Ascending aorta (tissue), 2 donors: ENCODE measurements at regions of chr2 and their contacts with region 1.

Region 1: DNA sequence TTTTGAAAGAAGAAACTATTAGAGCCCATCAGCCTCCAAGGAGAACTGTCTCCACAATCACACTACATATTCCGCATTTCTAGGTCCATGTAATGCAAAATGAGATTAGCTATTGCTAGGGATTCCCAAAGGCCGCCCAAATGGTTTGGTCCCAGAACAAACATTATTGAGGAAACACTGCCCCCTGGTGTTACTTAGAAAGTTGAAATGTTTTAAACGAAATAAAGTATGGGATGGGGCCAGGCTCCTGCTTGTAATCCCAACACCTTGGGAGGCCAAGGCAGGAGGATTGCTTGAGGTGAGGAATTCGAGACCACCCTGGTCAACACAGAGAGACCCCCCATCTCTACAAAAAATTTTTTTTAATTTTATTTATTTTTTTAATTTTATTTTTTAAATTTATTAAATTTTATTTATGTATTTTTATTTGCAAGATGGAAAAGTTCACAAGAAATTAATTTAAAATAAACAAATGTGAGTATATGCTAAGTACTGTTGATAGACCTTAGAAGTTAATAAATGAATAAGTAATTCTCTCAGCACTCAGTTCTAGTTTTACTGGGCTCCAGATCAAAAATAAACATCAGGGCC is 5.5 kb downstream of the NHEJ1 start:
- DNase-seq: no peak
- H3K4me3 ChIP-seq: no peak overlapping the region
- H3K27ac ChIP-seq: no peak overlapping the region
- H3K4me1 ChIP-seq: peaks cover 0 to 5% of the 10 kb centered on the region in 2 donors
- H3K27me3 ChIP-seq: no peaks in the 10 kb centered on the region
- CTCF ChIP-seq: peak; percentile 50 to 66 (median 65)

Region 2: DNA sequence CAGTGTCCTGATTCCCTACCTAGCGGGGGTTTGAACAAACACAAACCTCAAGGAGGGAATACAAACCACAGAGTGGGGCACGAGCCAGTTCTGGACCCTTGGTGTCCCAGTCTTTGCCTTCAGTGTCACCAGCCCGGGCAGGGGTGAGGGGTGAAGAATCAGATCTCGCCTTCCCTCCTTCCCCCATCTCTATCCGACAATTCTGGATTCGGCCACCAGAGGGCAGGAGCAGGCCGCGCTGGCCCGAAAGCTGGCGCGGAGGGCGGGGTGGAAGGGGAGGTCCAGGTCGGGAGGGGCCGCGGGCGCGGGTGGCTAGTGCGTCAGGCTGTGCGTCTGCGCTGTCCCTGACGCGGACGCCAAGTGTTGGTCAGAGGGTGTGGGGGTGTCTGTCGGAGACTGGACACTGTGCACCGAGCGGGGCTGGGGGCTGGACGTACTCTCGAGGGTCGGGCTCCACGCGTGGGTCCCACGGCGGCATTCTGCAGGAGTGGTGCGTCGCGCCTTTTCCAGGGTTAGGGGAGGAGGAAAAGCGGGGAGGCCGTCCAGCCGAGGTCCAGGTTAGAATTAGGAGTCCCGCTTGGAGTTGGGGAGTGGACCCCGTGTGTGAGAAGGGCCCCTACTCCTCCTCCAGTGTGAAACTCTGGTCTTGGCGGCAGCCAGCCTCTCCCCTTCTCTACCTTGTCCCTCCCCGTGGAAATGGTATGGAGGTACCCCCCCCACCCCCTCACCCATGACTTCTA is 159.0 kb before region 1 on chr2:
- intact Hi-C with region 1: loop called (anchors 1 kb)
- DNase-seq: peak; percentile 47 to 94
- H3K4me3 ChIP-seq: peak overlapping the region; percentile 26 to 54
- H3K27ac ChIP-seq: no peak overlapping the region
- H3K4me1 ChIP-seq: peaks cover 13 to 24% of the 10 kb centered on the region in 2 donors
- H3K27me3 ChIP-seq: peaks cover 41% of the 10 kb centered on the region
- CTCF ChIP-seq: peak; percentile 86 to 93 (median 90)

Region 3: DNA sequence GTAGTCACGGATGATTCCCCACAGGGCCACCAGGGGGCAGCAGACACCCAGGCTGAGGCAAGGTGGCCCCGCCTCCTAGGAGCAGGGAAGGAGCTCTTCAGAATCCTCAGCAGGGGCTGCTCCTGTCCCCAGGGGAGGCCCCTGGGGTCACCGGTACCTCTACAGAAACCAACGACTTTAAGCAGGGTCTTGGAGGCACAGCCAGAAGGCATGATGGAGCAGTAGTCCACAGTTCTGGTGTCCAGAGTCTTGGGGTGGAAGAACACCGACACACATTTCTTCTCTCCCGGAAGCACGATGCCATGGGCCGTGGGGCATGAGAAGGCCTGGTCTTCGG is 125.4 kb before region 1 on chr2:
- intact Hi-C with region 1: loop called (anchors 1 kb)
- DNase-seq: peak in 1 of 2 donors; percentile 84
- H3K4me3 ChIP-seq: no peak overlapping the region
- H3K27ac ChIP-seq: no peak overlapping the region
- H3K4me1 ChIP-seq: no peaks in the 10 kb centered on the region
- H3K27me3 ChIP-seq: no peaks in the 10 kb centered on the region
- CTCF ChIP-seq: peak; percentile 85 to 96 (median 96)

Region 4: GRCh38 chr2:219057709-219058540 is 97.2 kb before region 1 on chr2:
- intact Hi-C with region 1: loop called (anchors 1 kb)
- DNase-seq: peak; percentile 18 to 74
- H3K4me3 ChIP-seq: peak overlapping the region in 1 of 2 donors; percentile 56
- H3K27ac ChIP-seq: no peak overlapping the region
- H3K4me1 ChIP-seq: peaks cover 29 to 31% of the 10 kb centered on the region in 2 donors
- H3K27me3 ChIP-seq: peaks cover 19% of the 10 kb centered on the region
- CTCF ChIP-seq: peak; percentile 89 to 94 (median 92)

Region 5: DNA sequence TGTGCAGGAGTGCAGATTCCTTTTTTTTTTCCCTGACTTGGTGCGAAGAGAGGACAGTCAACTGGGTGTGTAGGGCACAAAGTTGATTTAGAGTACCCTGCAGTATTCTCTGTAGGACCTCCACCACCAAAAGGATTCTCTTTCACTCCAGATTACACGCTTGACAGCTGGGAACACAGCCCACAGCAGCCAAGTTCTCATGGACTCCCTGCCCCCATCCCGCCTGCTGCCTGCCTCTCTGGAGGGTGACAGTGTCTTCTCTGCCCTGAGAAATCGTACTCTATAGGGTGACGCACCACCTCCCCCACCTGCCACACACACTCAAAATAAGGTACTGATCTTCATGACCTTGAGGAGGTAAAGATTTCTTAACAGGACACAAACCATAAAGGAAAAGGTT is 67.8 kb before region 1 on chr2:
- intact Hi-C with region 1: no loop called
- DNase-seq: no peak
- H3K4me3 ChIP-seq: no peak overlapping the region
- H3K27ac ChIP-seq: no peak overlapping the region
- H3K4me1 ChIP-seq: no peaks in the 10 kb centered on the region
- H3K27me3 ChIP-seq: no peaks in the 10 kb centered on the region
- CTCF ChIP-seq: no peak

Region 6: DNA sequence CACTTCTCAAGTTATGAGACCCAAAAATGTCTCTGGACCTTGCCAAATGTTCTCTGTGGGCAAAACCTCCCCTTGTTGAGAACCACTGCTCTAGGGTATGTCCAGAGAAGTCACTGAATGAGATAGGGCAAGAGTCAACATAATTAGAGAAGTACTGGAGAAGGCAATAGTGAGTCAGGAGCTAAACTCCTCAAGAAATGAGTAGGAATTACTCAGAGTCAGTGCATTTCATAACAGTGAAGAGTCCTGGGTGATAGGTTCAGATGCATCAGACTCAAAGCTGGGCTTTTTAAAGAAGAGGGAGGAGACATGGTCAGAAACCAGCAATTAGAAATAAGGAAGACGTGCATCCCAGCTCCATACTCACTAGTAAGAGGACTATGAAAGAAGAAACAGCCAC is 55.8 kb before region 1 on chr2:
- intact Hi-C with region 1: no loop called
- DNase-seq: no peak
- H3K4me3 ChIP-seq: no peak overlapping the region
- H3K27ac ChIP-seq: no peak overlapping the region
- H3K4me1 ChIP-seq: no peaks in the 10 kb centered on the region
- H3K27me3 ChIP-seq: no peaks in the 10 kb centered on the region
- CTCF ChIP-seq: no peak